HepG2 (cell line): ENCODE measurements at regions of chr1 and their contacts with region 1.

Region 1: GRCh38 chr1:247111700-247112478 is 7.7 kb upstream of the ZNF669 start:
- DNase-seq: peak; percentile 31
- ATAC-seq: peak; percentile 74
- H3K4me3 ChIP-seq: peak overlapping the region; percentile 71 to 82 (median 77)
- H3K27ac ChIP-seq: peak overlapping the region; percentile 85
- H3K4me1 ChIP-seq: peaks cover 46% of the 10 kb centered on the region
- H3K27me3 ChIP-seq: no peaks in the 10 kb centered on the region
- CTCF ChIP-seq: peak; percentile 23; the same call in 1 of the 2 replicates
- EP300 ChIP-seq: no peak
- POLR2A ChIP-seq: peak; percentile 27 to 78
- RAD21 ChIP-seq: no peak; the same call in 1 of the 2 replicates

Region 2: DNA sequence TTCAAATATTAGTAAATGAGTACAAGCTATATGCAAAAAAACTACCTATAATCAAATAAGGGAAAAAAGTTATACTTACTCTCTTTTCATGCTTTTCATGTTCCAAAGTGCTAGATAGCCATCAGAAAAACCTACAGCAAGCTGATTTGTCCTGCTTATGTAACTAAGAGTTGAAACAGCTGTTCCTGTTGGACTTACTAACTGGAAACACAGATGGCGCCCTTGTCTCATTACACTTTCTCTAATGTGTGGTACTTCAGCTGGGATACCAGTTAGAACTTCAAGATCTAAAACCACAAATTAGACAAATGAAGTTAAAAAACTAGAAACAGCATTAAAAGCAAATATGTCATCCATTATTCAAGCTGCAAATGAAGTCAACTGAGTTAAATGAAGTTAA is 204.4 kb before region 1 on chr1:
- CTCF ChIA-PET with region 1: no interaction called
- POLR2A ChIA-PET with region 1: no interaction called
- in situ Hi-C with region 1: no loop called
- intact Hi-C with region 1: loop called (anchors 10 kb)
- DNase-seq: peak; percentile 69
- ATAC-seq: peak; percentile 75
- H3K4me3 ChIP-seq: no peak overlapping the region
- H3K27ac ChIP-seq: peak overlapping the region; percentile 48
- H3K4me1 ChIP-seq: peaks cover 15% of the 10 kb centered on the region
- H3K27me3 ChIP-seq: no peaks in the 10 kb centered on the region
- CTCF ChIP-seq: peak; percentile 72
- EP300 ChIP-seq: no peak
- POLR2A ChIP-seq: no peak
- RAD21 ChIP-seq: peak; percentile 71

Region 3: DNA sequence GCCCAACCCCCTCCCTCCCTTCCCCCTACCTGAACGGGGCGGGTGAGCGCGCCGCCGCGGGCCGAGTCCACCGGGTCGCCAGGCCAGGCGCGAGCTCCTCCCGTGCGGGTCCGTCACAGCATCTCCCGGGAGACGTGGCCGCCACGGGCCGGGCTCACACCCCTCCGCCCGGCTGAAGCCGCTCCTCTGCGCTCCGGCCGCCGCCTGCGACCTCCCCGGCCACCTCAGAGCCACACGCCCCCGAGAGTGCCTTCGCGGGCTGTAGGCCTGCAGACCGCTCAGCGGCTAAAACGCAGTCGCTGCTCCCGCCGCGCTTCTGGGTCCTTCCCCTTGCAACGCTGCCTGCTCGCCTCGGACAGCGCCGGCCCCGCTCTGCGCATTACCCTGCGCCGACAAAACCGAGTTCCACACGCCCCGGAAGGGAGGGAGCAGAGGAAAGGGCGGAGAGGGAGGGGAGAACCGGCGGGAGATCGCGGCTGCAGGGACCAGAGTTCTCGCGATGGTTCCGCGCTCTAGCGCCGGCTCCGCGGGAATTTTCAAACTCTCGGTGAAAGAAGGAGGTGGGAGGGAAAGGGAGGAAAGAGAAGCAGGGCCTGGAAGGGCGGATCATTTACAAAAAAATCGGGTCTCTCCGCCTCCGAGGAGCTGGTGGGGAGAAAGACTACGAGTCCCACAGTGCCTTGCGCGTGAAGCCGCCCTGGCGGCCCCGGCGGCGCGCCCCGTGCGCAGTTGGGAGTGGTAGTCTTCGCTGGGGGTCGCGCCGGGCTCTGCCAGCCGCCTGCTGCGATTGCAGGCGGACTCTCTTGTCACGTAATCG is 180.1 kb before region 1 on chr1 and contains the start of gene AHCTF1:
- CTCF ChIA-PET with region 1: no interaction called
- POLR2A ChIA-PET with region 1: no interaction called
- in situ Hi-C with region 1: loop called (anchors 10 kb)
- intact Hi-C with region 1: loop called (anchors 10 kb)
- DNase-seq: peak; percentile 97
- ATAC-seq: peak; percentile 96
- H3K4me3 ChIP-seq: peak within 1 kb of the TSS; percentile 91 to 99 (median 91)
- H3K27ac ChIP-seq: peak within 1 kb of the TSS; percentile 99
- H3K4me1 ChIP-seq: peaks cover 23% of the 10 kb centered on the region
- H3K27me3 ChIP-seq: no peaks in the 10 kb centered on the region; a peak in 1 of 5 replicates
- CTCF ChIP-seq: 0 out of 2 replicates have a peak, but pooled peaks have one; percentile 19
- EP300 ChIP-seq: no peak
- POLR2A ChIP-seq: peak; percentile 96
- RAD21 ChIP-seq: no peak; the same call in 1 of the 2 replicates
- total RNA-seq, gene AHCTF1: 45.9 and 73.9 TPM in 2 replicates

Region 4: DNA sequence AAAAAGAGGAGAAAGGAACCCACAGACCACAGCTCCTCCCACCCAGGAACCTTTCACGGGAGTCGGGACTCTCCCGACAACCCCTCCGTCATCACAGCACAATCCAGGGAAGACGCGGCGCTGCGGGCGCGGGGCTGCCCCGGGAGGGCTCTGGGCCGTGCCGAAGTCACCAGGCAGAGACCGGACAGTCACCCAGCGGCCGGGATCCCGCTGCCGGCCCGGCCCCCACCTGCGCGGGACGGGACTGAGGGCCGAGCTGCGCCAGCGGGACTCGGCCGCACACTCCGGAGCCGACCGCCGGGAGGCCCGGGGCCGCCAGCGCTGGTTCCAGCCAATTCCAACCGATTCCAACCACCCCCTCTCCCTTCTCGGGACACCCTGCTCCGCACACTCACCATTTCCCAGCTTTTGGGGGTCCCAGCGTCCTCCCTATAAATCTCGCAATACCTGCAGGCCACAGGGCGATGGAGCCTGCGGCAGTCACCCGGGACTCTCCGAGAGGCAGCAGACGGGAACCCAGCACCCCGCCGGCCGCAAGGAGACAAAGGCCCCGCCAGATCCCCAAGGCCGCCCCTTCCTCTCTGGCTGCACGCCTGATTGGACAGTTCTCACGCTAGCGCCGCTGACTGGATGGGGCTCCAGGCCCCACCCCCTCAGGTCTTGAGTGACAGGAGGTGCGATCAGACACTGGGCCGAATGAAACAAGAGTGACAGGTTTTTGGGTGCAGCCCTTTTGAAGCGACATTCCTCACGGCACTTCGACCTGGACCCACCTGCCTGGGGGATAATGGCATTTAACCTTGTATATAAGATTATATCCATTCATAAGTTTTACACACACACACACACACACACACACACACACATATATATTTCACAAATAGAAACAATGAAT is 104.1 kb before region 1 on chr1 and contains the start of gene ZNF695:
- CTCF ChIA-PET with region 1: no interaction called
- POLR2A ChIA-PET with region 1: no interaction called
- in situ Hi-C with region 1: no loop called
- intact Hi-C with region 1: loop called (anchors 5 kb)
- DNase-seq: peak; percentile 97
- ATAC-seq: peak; percentile 98
- H3K4me3 ChIP-seq: peak within 1 kb of the TSS; percentile 91 to 96 (median 95)
- H3K27ac ChIP-seq: peak within 1 kb of the TSS; percentile 78
- H3K4me1 ChIP-seq: peaks cover 29% of the 10 kb centered on the region
- H3K27me3 ChIP-seq: no peaks in the 10 kb centered on the region
- CTCF ChIP-seq: no peak
- EP300 ChIP-seq: no peak
- POLR2A ChIP-seq: peak; percentile 78 to 84
- RAD21 ChIP-seq: no peak
- total RNA-seq, gene ZNF695: 11.6 and 13.2 TPM in 2 replicates

Region 5: GRCh38 chr1:247189981-247190798 is 78.3 kb after region 1 on chr1:
- CTCF ChIA-PET with region 1: no interaction called
- POLR2A ChIA-PET with region 1: no interaction called
- in situ Hi-C with region 1: no loop called
- intact Hi-C with region 1: no loop called
- DNase-seq: no peak
- ATAC-seq: no peak
- H3K4me3 ChIP-seq: no peak overlapping the region
- H3K27ac ChIP-seq: no peak overlapping the region
- H3K4me1 ChIP-seq: no peaks in the 10 kb centered on the region
- H3K27me3 ChIP-seq: no peaks in the 10 kb centered on the region
- CTCF ChIP-seq: no peak
- EP300 ChIP-seq: no peak
- POLR2A ChIP-seq: no peak
- RAD21 ChIP-seq: no peak

Region 6: DNA sequence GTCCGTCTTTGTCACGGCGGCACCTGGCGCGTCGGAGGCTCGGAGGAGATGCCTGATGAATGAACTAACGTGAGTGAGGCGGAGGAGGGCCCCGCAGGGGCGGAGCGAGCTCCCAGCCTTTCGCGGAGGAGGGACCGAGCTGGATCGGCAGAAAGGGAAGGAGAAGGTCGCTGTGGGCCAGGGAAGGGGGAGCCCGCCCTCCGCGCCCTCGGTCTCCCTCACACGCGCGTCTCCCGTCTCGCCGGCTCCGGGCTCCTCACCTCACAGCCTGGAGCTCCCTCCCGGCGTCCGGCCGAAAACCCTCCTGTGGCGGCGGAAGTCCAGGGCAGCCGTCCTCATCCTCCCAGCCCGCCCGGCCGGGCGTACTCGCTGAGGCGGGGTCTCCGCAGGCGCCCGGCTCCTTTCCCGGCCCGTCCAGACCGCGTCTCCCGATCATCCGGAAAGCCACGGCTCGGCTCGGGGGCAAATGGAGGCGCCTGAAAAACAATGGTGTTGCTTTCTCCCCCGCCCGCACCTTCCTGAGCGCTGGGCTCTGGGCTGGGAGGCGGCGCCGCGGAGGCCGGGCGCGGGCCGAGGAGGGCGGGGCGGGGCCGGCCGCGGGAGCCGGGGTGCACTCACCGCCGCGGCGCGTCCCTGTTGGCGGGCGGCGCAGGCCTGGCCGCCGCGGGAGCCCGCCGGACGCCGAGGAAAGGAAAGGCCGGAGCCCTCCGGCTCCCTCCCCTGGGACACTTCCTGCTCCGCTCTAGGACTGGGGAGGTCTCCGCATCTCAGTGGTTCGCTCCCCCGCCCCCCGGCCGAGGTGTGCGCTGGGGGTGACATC is 219.5 kb after region 1 on chr1 and contains the start of gene ZNF496:
- CTCF ChIA-PET with region 1: no interaction called
- POLR2A ChIA-PET with region 1: no interaction called
- in situ Hi-C with region 1: no loop called
- intact Hi-C with region 1: loop called (anchors 5 kb)
- DNase-seq: peak; percentile 75
- ATAC-seq: peak; percentile 79
- H3K4me3 ChIP-seq: peak within 1 kb of the TSS; percentile 92 to 97 (median 94)
- H3K27ac ChIP-seq: peak within 1 kb of the TSS; percentile 79
- H3K4me1 ChIP-seq: peaks cover 38% of the 10 kb centered on the region
- H3K27me3 ChIP-seq: no peaks in the 10 kb centered on the region; a peak in 1 of 5 replicates
- CTCF ChIP-seq: peak; percentile 14
- EP300 ChIP-seq: peak in 1 of 2 experiments; percentile 28; a peak in 1 of 4 replicates
- POLR2A ChIP-seq: peak; percentile 58 to 74
- RAD21 ChIP-seq: no peak
- total RNA-seq, gene ZNF496: 14.6 and 14.8 TPM in 2 replicates